ENCODE measurements at regions of chr10 and their contacts with region 1.

Region 1: GRCh38 chr10:102151774-102152544 is at the start of gene NOLC1:
- DNase-seq: peak; percentile 98
- CTCF ChIP-seq: no peak

Region 2: DNA sequence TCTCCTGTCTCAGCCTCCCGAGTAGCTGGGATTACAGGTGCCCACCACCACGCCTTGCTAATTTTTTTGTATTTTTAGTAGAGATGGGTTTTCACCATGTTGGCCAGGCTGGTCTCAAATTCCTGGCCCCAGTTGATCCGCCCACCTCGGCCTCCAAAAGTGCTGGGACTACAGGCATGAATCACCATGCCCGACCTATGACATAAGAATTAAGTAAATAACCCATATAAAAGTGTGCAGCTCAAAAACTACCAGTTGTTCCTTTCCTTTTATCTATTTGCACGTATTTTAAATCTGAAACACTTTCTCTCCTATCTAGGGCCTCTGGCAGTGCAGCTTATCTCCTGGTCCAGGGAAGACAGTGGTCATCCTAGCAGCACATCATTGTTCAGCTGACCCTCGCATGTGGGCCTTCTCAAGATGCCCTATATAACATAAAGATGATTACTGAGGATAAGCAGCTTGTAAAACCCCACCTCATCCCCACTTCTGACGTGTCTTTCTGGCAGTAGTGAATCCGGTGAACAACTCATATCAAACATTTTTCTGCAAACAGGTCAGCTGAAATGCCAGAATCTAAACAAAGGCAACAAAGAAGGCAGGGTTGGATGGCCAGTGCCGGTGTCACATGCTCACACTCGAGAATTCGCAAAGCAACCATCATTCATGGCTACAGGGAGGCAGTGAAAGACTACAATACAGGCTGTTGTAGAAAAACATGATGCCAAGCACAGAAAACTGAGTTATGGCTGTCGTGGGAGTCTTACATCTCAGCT is 272.3 kb before region 1 on chr10:
- CTCF ChIA-PET with region 1: no interaction called
- POLR2A ChIA-PET with region 1: no interaction called
- DNase-seq: no peak
- CTCF ChIP-seq: no peak

Region 3: GRCh38 chr10:102140184-102140583 is 11.8 kb before region 1 on chr10:
- CTCF ChIA-PET with region 1: interaction called, 17 read pairs
- POLR2A ChIA-PET with region 1: interaction called, 24 read pairs
- DNase-seq: no peak
- CTCF ChIP-seq: no peak

Region 4: DNA sequence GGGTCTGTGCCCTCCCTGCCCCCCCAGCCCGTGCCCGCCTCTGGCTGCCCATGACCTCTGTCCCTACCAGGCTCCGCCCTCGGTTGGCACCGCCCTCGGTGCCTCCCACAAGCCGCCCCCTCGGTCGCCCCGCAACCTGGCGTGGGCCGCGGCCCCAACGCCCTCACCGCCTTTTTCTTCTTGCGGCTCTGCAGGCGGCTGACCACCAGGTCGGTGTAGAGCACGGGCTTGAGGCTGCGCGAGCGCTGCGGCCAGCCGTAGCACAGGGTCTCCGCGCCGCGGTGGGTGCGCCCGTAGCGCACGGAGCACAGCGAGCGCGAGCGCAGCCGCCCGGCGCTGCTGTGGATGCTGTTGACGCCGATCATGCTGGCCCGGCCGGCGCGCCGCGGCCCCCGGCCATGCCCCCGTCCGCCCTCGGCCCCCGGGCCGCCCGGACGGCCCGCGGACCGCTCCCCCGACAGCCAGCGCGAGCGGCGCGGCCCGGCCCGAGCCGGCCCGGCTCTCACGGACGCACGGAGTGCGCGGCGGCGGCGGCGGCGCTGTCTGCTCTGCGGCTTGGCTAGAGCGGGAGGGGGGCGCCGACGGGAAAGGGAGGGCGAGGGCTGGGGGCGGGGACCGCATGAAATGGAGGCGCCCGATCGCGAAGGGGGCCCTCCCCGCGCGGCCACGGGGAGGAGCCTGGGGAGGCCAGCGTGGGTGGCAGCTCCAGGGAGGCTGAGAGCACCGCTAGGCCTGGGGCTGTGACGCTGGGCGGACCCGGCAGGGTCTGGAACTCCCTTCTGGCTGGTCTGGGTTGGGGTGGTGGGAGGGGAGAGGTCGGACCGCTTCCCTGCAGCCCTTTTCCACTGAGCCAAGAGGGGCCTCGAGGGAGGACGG is 257.0 kb after region 1 on chr10:
- CTCF ChIA-PET with region 1: no interaction called
- POLR2A ChIA-PET with region 1: no interaction called
- DNase-seq: peak; percentile 75
- CTCF ChIP-seq: no peak

Region 5: DNA sequence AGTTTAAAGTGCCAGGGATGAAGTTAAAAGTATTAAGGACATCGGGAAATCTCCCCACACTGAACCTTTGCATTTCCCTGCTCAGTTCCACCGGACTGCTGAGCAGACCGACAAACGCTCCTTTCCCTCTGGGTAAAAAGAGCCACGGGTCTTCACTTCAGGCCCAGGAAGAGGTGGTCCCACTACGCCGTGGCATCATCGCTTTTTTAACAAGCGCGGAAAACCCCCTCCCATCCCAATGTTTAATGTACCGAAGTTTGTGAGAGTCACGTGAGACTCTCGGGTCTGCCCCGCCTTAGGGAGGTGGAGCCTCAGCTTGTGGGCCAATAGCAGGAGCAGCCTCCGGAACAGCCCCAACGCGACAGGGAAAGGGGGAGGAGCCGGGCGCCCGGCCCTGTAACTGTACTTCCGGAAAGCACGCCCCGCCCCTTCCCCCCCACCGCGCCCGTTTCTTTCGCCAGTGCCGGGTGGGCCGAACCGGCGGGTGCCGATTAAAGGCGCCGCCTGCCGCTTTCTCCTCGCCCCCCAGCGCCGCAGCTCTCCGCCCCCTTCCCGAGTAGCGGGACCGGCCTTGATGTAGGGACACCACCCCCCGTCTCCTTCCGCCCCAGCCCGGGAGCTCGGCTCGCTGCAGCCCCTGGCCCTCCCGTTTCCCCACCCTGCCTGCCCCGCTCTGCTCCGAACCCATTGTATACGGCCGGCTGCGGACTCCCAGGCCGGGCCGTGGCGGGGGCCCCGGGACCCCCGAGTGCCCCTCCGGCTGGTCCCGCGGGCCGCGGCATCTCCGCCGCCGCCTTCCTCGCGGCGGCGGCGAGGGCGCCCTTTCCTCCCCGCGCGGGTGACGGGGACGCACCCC is 490.1 kb after region 1 on chr10:
- CTCF ChIA-PET with region 1: no interaction called
- POLR2A ChIA-PET with region 1: no interaction called
- DNase-seq: peak; percentile 96
- CTCF ChIP-seq: no peak

Measured in GM10248 (cell line).